Activated B cell treated with CpG ODN at 0.5 μM for 24 hours (primary cell): ENCODE measurements at regions of chr1 and their contacts with region 1.

Region 1: DNA sequence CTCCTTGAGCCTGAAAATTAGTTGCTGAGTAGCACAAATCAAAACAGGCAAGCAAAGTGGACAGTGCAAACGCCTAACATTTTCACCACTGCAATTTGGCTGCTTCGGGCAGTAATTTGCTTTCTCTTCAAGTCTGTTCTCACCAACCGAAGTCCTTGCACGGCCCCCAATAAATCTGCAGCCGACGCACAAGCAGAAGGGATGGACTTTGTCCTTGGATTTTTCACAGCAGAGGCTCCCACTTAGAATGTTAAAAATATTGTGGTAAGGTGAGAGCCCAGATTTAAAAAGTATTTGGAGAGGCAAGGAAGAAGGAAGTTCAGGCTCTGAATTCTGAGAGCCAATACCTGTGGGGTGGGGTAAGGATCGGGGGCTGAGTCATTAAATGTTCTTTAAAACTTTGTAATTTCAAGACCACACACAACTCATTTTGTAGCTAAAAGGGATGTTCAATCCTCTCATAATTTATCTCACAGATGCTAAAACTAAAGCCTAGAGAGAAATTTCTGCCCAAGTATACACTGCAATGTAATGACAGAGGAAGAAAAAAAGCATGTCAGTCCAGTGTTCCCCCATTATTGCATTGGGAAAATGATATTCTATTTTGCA is 6.2 kb downstream of the CD247 start:
- DNase-seq: no peak
- ATAC-seq: no peak
- H3K4me3 Mint-ChIP-seq: no peak overlapping the region
- H3K27ac Mint-ChIP-seq: no peak overlapping the region
- H3K4me1 Mint-ChIP-seq: no peaks in the 10 kb centered on the region
- H3K27me3 Mint-ChIP-seq: peaks cover 28% of the 10 kb centered on the region
- CTCF ChIP-seq: no peak

Region 2: DNA sequence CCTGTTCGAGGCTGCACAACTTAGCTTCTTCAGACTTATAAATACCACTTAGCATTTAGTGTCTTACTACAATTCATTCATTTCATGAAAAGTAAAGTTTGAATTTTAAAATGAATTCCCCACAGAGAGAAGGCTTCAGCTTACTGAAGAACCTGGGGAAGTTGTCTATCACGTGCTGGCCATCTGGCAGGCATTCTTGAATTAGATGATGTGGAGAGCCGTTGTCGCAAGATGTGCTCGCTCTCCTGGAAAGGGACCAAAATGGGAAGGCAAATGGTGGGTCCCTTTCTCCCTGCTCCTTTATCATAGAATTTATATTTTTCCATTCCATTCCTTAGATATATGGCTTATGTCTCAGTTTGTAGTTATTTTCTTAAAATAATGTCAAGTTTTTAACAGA is 84.3 kb before region 1 on chr1:
- CTCF ChIA-PET with region 1: no interaction called
- POLR2A ChIA-PET with region 1: no interaction called
- intact Hi-C with region 1: no loop called
- DNase-seq: no peak
- ATAC-seq: no peak
- H3K4me3 Mint-ChIP-seq: no peak overlapping the region
- H3K27ac Mint-ChIP-seq: no peak overlapping the region
- H3K4me1 Mint-ChIP-seq: peaks cover 40% of the 10 kb centered on the region
- H3K27me3 Mint-ChIP-seq: no peaks in the 10 kb centered on the region
- CTCF ChIP-seq: no peak

Region 3: DNA sequence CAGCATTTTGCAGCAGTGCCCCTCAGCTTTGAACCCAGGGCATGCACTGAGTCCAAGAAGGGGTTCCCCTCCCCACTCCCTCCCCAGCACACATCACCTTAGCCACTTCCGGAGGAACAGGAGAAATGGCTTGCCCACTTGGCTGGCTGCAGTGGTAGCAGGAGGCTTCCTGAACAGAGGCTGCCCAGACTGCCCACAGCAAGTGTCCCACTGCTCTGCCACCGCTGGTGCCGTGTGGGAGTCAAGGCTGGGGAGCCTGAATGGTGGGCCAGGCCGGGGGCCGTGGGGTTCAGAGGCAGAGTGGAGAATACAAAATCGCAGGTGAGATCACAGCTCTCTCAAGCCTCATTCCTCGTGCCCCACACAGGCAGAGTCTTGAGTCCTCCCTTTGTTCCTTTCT is 28.4 kb before region 1 on chr1:
- CTCF ChIA-PET with region 1: no interaction called
- POLR2A ChIA-PET with region 1: no interaction called
- intact Hi-C with region 1: loop called (anchors 1 kb)
- DNase-seq: no peak
- ATAC-seq: no peak
- H3K4me3 Mint-ChIP-seq: no peak overlapping the region
- H3K27ac Mint-ChIP-seq: no peak overlapping the region
- H3K4me1 Mint-ChIP-seq: no peaks in the 10 kb centered on the region
- H3K27me3 Mint-ChIP-seq: peaks cover 24% of the 10 kb centered on the region
- CTCF ChIP-seq: no peak

Region 4: DNA sequence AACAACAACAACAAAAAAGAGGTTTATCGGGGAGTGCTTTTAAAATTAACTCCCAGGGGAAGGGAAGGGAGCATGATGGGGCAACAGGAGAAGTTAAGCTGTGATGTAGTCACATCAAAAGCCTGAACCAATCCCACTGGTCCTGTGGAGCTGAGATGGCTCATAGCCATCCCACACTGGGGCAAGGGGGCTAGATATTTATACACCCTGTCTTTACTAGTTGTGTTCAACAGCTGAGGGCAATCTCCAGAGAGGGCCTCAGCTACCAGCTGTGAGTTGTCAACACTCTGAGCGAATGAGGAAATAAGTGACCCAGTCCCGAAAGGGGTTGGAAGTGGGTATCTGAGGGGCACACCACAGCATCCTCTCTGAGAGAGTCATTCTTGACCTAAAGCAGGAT is 72.4 kb after region 1 on chr1:
- CTCF ChIA-PET with region 1: no interaction called
- POLR2A ChIA-PET with region 1: no interaction called
- intact Hi-C with region 1: no loop called
- DNase-seq: no peak
- ATAC-seq: no peak
- H3K4me3 Mint-ChIP-seq: no peak overlapping the region
- H3K27ac Mint-ChIP-seq: no peak overlapping the region
- H3K4me1 Mint-ChIP-seq: peaks cover 13% of the 10 kb centered on the region
- H3K27me3 Mint-ChIP-seq: no peaks in the 10 kb centered on the region
- CTCF ChIP-seq: no peak

Region 5: GRCh38 chr1:167854167-167854566 is 342.0 kb after region 1 on chr1:
- CTCF ChIA-PET with region 1: no interaction called
- POLR2A ChIA-PET with region 1: no interaction called
- intact Hi-C with region 1: no loop called
- DNase-seq: no peak
- ATAC-seq: no peak
- H3K4me3 Mint-ChIP-seq: no peak overlapping the region
- H3K27ac Mint-ChIP-seq: no peak overlapping the region
- H3K4me1 Mint-ChIP-seq: no peaks in the 10 kb centered on the region
- H3K27me3 Mint-ChIP-seq: no peaks in the 10 kb centered on the region
- CTCF ChIP-seq: no peak